Endothelial cell of umbilical vein (primary cell): ENCODE measurements at regions of chr1 and their contacts with region 1.

Region 1: DNA sequence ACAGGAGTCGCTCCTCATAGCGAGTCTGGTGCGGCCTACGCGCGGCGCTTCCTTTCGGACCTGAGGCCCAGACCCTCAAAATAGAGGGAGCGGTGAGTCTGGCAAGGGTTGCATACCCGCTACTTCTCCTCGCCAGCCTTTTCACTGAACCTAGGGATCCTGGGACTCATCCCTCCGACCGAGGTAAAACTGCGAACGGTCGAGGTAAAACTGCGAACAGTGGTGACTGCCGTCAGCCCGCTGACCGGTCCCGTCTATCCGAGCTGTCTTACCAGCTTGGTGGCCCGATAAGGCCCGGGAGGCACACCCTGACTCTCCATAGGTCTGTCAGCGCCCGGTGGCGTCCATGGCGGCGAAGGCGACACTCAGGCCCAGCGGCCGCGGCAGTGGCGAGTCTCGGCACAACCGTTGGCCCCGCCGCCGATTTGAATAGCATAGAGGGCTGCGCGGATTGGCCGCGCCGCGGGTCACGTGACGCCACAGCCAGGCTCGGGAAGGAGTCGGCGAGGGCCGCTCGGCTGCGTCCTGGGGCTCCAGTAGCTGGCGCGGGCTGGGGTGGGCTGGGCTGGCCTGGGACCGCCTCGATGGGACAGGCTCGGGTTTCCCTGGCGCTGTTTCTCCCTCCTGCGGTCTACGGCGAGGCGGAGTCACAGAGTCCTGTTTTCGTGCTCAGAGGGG is at the start of gene DEPDC1:
- DNase-seq: peak; percentile 95
- H3K4me3 ChIP-seq: peak within 1 kb of the TSS; percentile 60 to 100 (median 99)
- H3K27ac ChIP-seq: peak within 1 kb of the TSS; percentile 87
- H3K4me1 ChIP-seq: peaks cover 22% of the 10 kb centered on the region
- H3K27me3 ChIP-seq: no peaks in the 10 kb centered on the region
- CTCF ChIP-seq: no peak
- POLR2A ChIP-seq: peak; percentile 10
- total RNA-seq, gene DEPDC1: 26.0 and 30.4 TPM in 2 replicates

Region 2: DNA sequence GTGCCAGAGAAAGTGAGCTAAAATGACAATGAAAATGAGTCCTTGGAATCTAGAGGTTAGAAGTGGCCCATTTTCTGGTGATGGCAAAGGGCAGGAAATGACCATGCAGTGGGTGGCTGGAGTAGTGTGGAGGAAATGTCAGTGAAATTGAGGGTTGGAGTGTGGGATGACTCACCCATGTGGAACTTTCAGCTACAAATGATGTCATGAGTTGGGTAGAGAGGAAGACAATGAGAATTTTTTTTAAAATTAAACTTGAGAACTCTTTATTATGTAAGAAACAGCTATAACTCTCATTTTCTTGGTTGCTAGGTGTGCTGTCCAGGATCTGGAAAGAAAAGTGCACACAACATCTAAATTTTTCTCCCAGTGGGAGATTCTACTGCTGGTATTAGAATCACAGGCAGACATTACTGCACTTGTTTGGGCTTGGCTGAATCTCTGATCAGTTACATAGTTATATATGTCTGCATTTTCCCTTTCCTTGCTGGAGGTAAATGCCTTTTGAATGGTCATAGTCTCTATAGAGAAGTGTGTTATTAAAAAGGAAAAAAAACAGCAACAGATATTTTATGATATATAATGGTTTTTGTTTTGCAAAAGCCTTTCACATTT is 606.8 kb before region 1 on chr1:
- CTCF ChIA-PET with region 1: no interaction called
- POLR2A ChIA-PET with region 1: no interaction called
- dilution Hi-C with region 1: no loop called
- intact Hi-C with region 1: loop called (anchors 10 kb)
- DNase-seq: peak; percentile 93
- H3K4me3 ChIP-seq: no peak overlapping the region
- H3K27ac ChIP-seq: peak overlapping the region; percentile 79
- H3K4me1 ChIP-seq: peaks cover 26% of the 10 kb centered on the region
- H3K27me3 ChIP-seq: no peaks in the 10 kb centered on the region
- CTCF ChIP-seq: no peak
- POLR2A ChIP-seq: no peak

Region 3: DNA sequence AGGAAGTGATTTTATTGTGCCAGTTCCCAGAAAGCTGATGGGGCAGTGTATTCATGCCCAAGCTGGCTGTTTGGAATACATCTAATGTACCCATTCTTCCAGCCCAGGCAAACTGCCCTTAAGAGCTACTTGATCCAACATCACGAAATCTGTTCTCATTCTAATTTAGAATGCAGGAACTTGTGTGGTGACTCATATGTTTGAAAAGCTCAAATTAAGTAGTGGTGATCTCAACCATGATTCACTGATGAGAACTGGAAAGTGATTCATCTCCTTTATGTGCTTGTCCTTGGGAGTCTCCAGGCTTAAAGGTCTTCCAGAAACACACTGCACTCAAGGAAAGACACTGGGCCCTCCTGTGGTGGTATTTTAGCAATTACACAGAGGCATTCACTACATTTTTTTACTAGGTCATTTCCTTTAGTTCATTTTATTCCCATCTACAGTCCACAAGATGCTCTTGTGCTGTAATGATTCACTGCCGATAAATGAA is 112.5 kb before region 1 on chr1:
- CTCF ChIA-PET with region 1: no interaction called
- POLR2A ChIA-PET with region 1: no interaction called
- dilution Hi-C with region 1: no loop called
- intact Hi-C with region 1: loop called (anchors 2 kb)
- DNase-seq: peak; percentile 98
- H3K4me3 ChIP-seq: peak overlapping the region in 1 of 3 experiments; percentile 18
- H3K27ac ChIP-seq: peak overlapping the region; percentile 97
- H3K4me1 ChIP-seq: peaks cover 30% of the 10 kb centered on the region
- H3K27me3 ChIP-seq: no peaks in the 10 kb centered on the region
- CTCF ChIP-seq: peak; percentile 32 to 35
- POLR2A ChIP-seq: no peak

Region 4: GRCh38 chr1:68481041-68481440 is 15.8 kb before region 1 on chr1:
- CTCF ChIA-PET with region 1: interaction called, 10 read pairs
- POLR2A ChIA-PET with region 1: no interaction called
- dilution Hi-C with region 1: no loop called
- intact Hi-C with region 1: loop called (anchors 2 kb)
- DNase-seq: no peak
- H3K4me3 ChIP-seq: no peak overlapping the region
- H3K27ac ChIP-seq: no peak overlapping the region
- H3K4me1 ChIP-seq: peaks cover 8% of the 10 kb centered on the region
- H3K27me3 ChIP-seq: no peaks in the 10 kb centered on the region
- CTCF ChIP-seq: no peak
- POLR2A ChIP-seq: no peak

Region 5: GRCh38 chr1:68551459-68551858 is 54.6 kb after region 1 on chr1:
- CTCF ChIA-PET with region 1: no interaction called
- POLR2A ChIA-PET with region 1: no interaction called
- dilution Hi-C with region 1: no loop called
- intact Hi-C with region 1: loop called (anchors 1 kb)
- DNase-seq: peak; percentile 38
- H3K4me3 ChIP-seq: no peak overlapping the region
- H3K27ac ChIP-seq: no peak overlapping the region
- H3K4me1 ChIP-seq: peaks cover 15% of the 10 kb centered on the region
- H3K27me3 ChIP-seq: no peaks in the 10 kb centered on the region
- CTCF ChIP-seq: no peak
- POLR2A ChIP-seq: no peak

Region 6: DNA sequence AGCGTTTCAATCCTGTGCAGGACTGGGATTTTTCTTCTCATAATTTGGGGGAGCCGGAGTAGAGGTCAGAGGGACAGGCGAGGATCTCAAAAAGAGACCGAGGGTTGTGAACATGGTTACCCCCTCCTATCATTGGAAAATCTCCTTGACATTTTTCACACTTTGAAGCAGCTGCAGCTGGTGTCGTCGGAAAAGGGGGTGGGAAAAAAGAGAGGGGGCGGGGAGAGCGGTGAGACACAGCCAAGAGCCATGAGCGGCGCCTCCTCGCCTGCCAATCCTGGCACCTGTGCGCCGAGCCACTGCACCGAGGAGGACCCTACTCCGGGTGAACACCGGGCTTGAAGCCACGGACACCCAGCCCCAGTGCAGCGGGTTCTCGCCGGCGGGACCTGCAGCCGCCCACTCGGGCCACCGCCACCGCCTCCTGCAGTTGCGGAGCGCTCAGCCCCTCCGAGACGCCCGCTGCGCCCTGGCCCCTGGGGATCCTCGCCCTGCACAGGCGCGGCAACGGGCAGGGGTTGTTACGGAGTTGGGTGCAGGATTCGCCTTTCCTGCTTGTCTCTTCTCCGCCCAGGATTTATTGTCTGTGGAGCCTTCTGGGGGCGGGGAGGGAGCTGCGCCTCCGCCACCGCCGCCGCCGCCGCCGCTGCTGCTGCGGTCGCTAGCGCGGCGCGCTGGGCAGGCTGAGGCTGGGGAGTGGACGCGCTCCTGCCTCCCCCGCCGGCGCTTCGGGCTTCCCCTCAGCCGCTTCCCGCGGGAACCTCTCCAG is 1071.0 kb after region 1 on chr1 and contains the start of gene LRRC7:
- CTCF ChIA-PET with region 1: no interaction called
- POLR2A ChIA-PET with region 1: no interaction called
- dilution Hi-C with region 1: no loop called
- intact Hi-C with region 1: loop called (anchors 10 kb)
- DNase-seq: peak; percentile 34
- H3K4me3 ChIP-seq: peak within 1 kb of the TSS; percentile 46 to 58 (median 51)
- H3K27ac ChIP-seq: no peak within 1 kb of the TSS
- H3K4me1 ChIP-seq: peaks cover 14% of the 10 kb centered on the region
- H3K27me3 ChIP-seq: peaks cover 23 to 24% of the 10 kb centered on the region in 2 experiments
- CTCF ChIP-seq: no peak
- POLR2A ChIP-seq: no peak
- total RNA-seq, gene LRRC7: 0.11 and 0.18 TPM in 2 replicates

Region 7: GRCh38 chr1:70354332-70355110 is 1857.7 kb after region 1 on chr1 and contains the start of gene ANKRD13C:
- CTCF ChIA-PET with region 1: no interaction called
- POLR2A ChIA-PET with region 1: no interaction called
- dilution Hi-C with region 1: no loop called
- intact Hi-C with region 1: loop called (anchors 10 kb)
- DNase-seq: peak; percentile 97
- H3K4me3 ChIP-seq: peak within 1 kb of the TSS; percentile 61 to 83 (median 83)
- H3K27ac ChIP-seq: peak within 1 kb of the TSS; percentile 83
- H3K4me1 ChIP-seq: peaks cover 11% of the 10 kb centered on the region
- H3K27me3 ChIP-seq: no peaks in the 10 kb centered on the region
- CTCF ChIP-seq: peak in 1 of 2 donors; percentile 16
- POLR2A ChIP-seq: peak; percentile 84
- total RNA-seq, gene ANKRD13C: 17.3 and 17.6 TPM in 2 replicates